Activated CD4-positive, alpha-beta T cell treated with anti-CD3 and anti-CD28 coated beads, Interleukin-2, amount 10 ng/mL, durations not matched to agents 24 days and 14 days (primary cell): ENCODE measurements at regions of chr1 and their contacts with region 1.

Region 1: GRCh38 chr1:35298464-35298863 is 30.0 kb downstream of the ZMYM4 start:
- DNase-seq: peak; percentile 80
- H3K4me3 Mint-ChIP-seq: no peak overlapping the region
- H3K27ac Mint-ChIP-seq: no peak overlapping the region
- H3K4me1 Mint-ChIP-seq: no peaks in the 10 kb centered on the region
- H3K27me3 Mint-ChIP-seq: no peaks in the 10 kb centered on the region

Region 2: GRCh38 chr1:35202048-35202719 is 96.3 kb before region 1 on chr1:
- intact Hi-C with region 1: loop called (anchors 1 kb)
- DNase-seq: peak; percentile 92
- H3K4me3 Mint-ChIP-seq: no peak overlapping the region
- H3K27ac Mint-ChIP-seq: no peak overlapping the region
- H3K4me1 Mint-ChIP-seq: peaks cover 6% of the 10 kb centered on the region
- H3K27me3 Mint-ChIP-seq: peaks cover 22% of the 10 kb centered on the region